PC-3 (cell line): ENCODE measurements at regions of chr2 and their contacts with region 1.

Region 1: GRCh38 chr2:60533101-60534046 is 20.1 kb downstream of the BCL11A start:
- DNase-seq: peak; percentile 89
- ATAC-seq: peak; percentile 95
- H3K4me3 ChIP-seq: peak overlapping the region; percentile 38; the same call in 1 of the 2 replicates
- H3K27ac ChIP-seq: peak overlapping the region; percentile 18
- H3K4me1 ChIP-seq: peaks cover 43% of the 10 kb centered on the region
- H3K27me3 ChIP-seq: no peaks in the 10 kb centered on the region
- CTCF ChIP-seq: no peak

Region 2: GRCh38 chr2:60512641-60513040 is 20.7 kb before region 1 on chr2:
- CTCF ChIA-PET with region 1: no interaction called
- POLR2A ChIA-PET with region 1: no interaction called
- intact Hi-C with region 1: loop called (anchors 1 kb)
- DNase-seq: peak; percentile 90
- ATAC-seq: peak; percentile 97
- H3K4me3 ChIP-seq: peak overlapping the region; percentile 34; the same call in 1 of the 2 replicates
- H3K27ac ChIP-seq: peak overlapping the region; percentile 83
- H3K4me1 ChIP-seq: peaks cover 35% of the 10 kb centered on the region
- H3K27me3 ChIP-seq: no peaks in the 10 kb centered on the region
- CTCF ChIP-seq: no peak